ENCODE measurements at regions of chr7 and their contacts with region 1.

Region 1: GRCh38 chr7:55964261-55965099 is at the start of gene NIPSNAP2:
- DNase-seq: peak; percentile 26 to 89 (median 53)
- ATAC-seq: peak; percentile 92
- H3K4me3 ChIP-seq: peak within 1 kb of the TSS; percentile 60
- H3K4me3 Mint-ChIP-seq: peak within 1 kb of the TSS; percentile 90
- H3K27ac ChIP-seq: peak within 1 kb of the TSS; percentile 70 to 76
- H3K27ac Mint-ChIP-seq: peak within 1 kb of the TSS; percentile 92
- H3K4me1 ChIP-seq: peaks cover 37% of the 10 kb centered on the region
- H3K4me1 Mint-ChIP-seq: peaks cover 43% of the 10 kb centered on the region
- H3K27me3 ChIP-seq: no peaks in the 10 kb centered on the region
- H3K27me3 Mint-ChIP-seq: no peaks in the 10 kb centered on the region
- CTCF ChIP-seq: peak; percentile 13
- total RNA-seq, gene NIPSNAP2: 40.7 to 45.9 TPM

Region 2: DNA sequence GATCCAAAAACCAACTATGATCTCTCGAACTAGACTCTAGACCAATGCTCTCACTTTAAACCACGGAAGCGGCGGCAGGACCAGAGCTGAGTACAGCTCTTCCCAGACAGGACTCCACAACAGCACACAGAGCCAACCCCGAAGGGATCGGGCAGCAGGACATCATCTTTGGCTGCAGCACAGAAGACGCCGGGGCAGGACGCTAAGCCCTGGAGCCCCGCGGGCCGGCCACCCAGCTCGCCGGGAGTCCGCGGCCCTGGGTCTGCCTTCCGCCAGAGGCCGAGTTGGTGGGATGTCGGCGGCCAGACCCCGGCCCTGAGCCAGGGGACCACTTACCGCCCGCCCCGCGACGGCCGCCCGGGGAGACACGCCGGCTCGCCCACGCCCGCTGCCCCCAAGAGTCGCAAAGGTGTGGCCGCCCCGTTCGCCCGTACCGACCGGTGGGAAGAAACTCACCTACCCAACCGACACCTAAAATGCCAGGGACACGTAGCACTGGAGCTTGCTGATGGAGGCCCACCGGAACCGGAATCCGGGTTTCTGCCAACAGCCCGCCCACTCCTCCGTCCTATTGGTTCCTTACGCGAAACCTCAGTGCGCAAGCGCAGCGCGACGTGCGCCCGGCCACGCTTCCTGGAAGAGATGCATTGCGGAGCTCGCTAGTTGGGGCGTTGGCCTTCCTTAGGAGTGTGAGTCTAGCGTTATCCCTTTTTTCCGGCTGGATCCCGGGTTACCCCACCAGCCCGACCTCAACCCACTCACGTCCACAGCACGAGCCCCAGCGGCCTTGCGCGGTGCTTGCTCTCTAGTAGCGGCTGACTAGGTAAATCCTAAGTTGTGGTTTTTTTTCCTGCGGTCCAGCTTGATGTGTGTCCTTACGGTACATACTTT is 1205.5 kb before region 1 on chr7 and contains the start of gene SEC61G:
- CTCF ChIA-PET with region 1: no interaction called
- POLR2A ChIA-PET with region 1: no interaction called
- intact Hi-C with region 1: loop called in 1 of 2 experiments (anchors 10 kb)
- DNase-seq: peak; percentile 91 to 98 (median 93)
- ATAC-seq: peak; percentile 97
- H3K4me3 ChIP-seq: peak within 1 kb of the TSS; percentile 69
- H3K4me3 Mint-ChIP-seq: peak within 1 kb of the TSS; percentile 96
- H3K27ac ChIP-seq: peak within 1 kb of the TSS; percentile 63 to 73
- H3K27ac Mint-ChIP-seq: peak within 1 kb of the TSS; percentile 95
- H3K4me1 ChIP-seq: peaks cover 21% of the 10 kb centered on the region
- H3K4me1 Mint-ChIP-seq: peaks cover 54% of the 10 kb centered on the region
- H3K27me3 ChIP-seq: no peaks in the 10 kb centered on the region
- H3K27me3 Mint-ChIP-seq: no peaks in the 10 kb centered on the region
- CTCF ChIP-seq: no peak
- total RNA-seq, gene SEC61G: 43.9 to 51.3 TPM

Region 3: GRCh38 chr7:55280031-55280454 is 684.4 kb before region 1 on chr7:
- CTCF ChIA-PET with region 1: no interaction called
- POLR2A ChIA-PET with region 1: no interaction called
- intact Hi-C with region 1: loop called in 1 of 2 experiments (anchors 10 kb)
- DNase-seq: peak; percentile 23 to 81 (median 44)
- ATAC-seq: peak; percentile 63
- H3K4me3 ChIP-seq: no peak overlapping the region
- H3K4me3 Mint-ChIP-seq: no peak overlapping the region
- H3K27ac ChIP-seq: no peak overlapping the region
- H3K27ac Mint-ChIP-seq: no peak overlapping the region
- H3K4me1 ChIP-seq: no peaks in the 10 kb centered on the region
- H3K4me1 Mint-ChIP-seq: no peaks in the 10 kb centered on the region
- H3K27me3 ChIP-seq: peaks cover 0 to 2% of the 10 kb centered on the region in 2 experiments
- H3K27me3 Mint-ChIP-seq: peaks cover 4% of the 10 kb centered on the region
- CTCF ChIP-seq: peak; percentile 71

Region 4: GRCh38 chr7:55572378-55573233 is 391.9 kb before region 1 on chr7 and contains the start of gene VOPP1:
- CTCF ChIA-PET with region 1: no interaction called
- POLR2A ChIA-PET with region 1: no interaction called
- intact Hi-C with region 1: loop called in 1 of 2 experiments (anchors 10 kb)
- DNase-seq: peak in 13 of 14 experiments; percentile 35 to 90 (median 57)
- ATAC-seq: peak; percentile 38
- H3K4me3 ChIP-seq: peak within 1 kb of the TSS; percentile 85
- H3K4me3 Mint-ChIP-seq: peak within 1 kb of the TSS; percentile 96
- H3K27ac ChIP-seq: peak within 1 kb of the TSS; percentile 75 to 89
- H3K27ac Mint-ChIP-seq: peak within 1 kb of the TSS; percentile 87
- H3K4me1 ChIP-seq: peaks cover 59% of the 10 kb centered on the region
- H3K4me1 Mint-ChIP-seq: peaks cover 63% of the 10 kb centered on the region
- H3K27me3 ChIP-seq: no peaks in the 10 kb centered on the region
- H3K27me3 Mint-ChIP-seq: no peaks in the 10 kb centered on the region
- CTCF ChIP-seq: no peak
- total RNA-seq, gene VOPP1: 49.6 to 53.1 TPM

Region 5: GRCh38 chr7:55887821-55888247 is 76.6 kb before region 1 on chr7:
- CTCF ChIA-PET with region 1: no interaction called
- POLR2A ChIA-PET with region 1: no interaction called
- intact Hi-C with region 1: loop called in 1 of 2 experiments (anchors 5 kb)
- DNase-seq: peak in 1 of 14 experiments; percentile 1
- ATAC-seq: peak; percentile 12
- H3K4me3 ChIP-seq: peak overlapping the region; percentile 60
- H3K4me3 Mint-ChIP-seq: peak overlapping the region; percentile 90
- H3K27ac ChIP-seq: no peak overlapping the region
- H3K27ac Mint-ChIP-seq: peak overlapping the region; percentile 90
- H3K4me1 ChIP-seq: peaks cover 13% of the 10 kb centered on the region
- H3K4me1 Mint-ChIP-seq: peaks cover 6% of the 10 kb centered on the region
- H3K27me3 ChIP-seq: no peaks in the 10 kb centered on the region
- H3K27me3 Mint-ChIP-seq: no peaks in the 10 kb centered on the region
- CTCF ChIP-seq: no peak

Region 6: DNA sequence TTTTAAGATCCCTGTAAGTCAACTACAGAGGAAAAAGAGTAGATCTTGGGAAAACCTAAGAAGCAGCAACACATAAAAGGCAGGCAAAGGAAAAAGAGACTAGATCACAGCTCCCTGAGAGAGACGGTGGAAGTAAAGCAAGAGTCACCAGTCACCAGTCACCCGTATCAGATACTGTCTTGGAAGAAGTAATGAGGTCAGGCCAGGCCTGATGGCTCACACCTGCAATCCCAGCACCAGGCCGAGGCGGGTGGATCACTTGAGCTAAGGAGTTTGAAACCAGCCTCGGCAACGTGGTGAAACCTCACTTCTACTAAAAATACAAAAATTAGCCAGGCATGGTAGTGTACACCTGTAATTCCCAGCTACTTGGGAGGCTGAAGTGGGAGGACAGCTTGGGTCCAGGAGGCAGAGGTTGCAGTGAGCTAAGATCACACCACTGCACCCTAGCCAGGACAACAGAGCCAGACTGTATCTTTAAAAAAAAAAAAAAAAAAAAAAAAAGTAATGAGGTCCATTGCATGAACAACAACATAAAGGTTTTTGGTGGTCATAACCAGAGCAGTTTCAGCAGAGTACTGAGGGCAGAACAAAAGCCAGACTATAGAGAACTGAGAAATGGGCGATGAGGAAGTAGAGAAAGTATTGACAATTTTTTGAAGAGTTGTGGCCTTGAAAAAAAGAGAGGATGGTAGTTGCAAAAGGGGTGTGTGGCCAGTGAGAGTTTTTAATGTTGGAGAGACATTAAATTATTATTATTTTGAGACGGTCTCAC is 60.3 kb before region 1 on chr7:
- CTCF ChIA-PET with region 1: no interaction called
- POLR2A ChIA-PET with region 1: no interaction called
- intact Hi-C with region 1: no loop called
- DNase-seq: no peak
- ATAC-seq: no peak
- H3K4me3 ChIP-seq: no peak overlapping the region
- H3K4me3 Mint-ChIP-seq: no peak overlapping the region
- H3K27ac ChIP-seq: no peak overlapping the region
- H3K27ac Mint-ChIP-seq: no peak overlapping the region
- H3K4me1 ChIP-seq: no peaks in the 10 kb centered on the region
- H3K4me1 Mint-ChIP-seq: no peaks in the 10 kb centered on the region
- H3K27me3 ChIP-seq: no peaks in the 10 kb centered on the region
- H3K27me3 Mint-ChIP-seq: no peaks in the 10 kb centered on the region
- CTCF ChIP-seq: no peak

Region 7: GRCh38 chr7:56063882-56064625 is 99.6 kb after region 1 on chr7 and contains the start of gene SUMF2:
- CTCF ChIA-PET with region 1: interaction called, 5 read pairs
- POLR2A ChIA-PET with region 1: interaction called, 5 read pairs
- intact Hi-C with region 1: loop called in 1 of 2 experiments (anchors 5 kb)
- DNase-seq: peak; percentile 81 to 97 (median 89)
- ATAC-seq: peak; percentile 89
- H3K4me3 ChIP-seq: peak within 1 kb of the TSS; percentile 95
- H3K4me3 Mint-ChIP-seq: peak within 1 kb of the TSS; percentile 93
- H3K27ac ChIP-seq: peak within 1 kb of the TSS; percentile 82 to 84
- H3K27ac Mint-ChIP-seq: peak within 1 kb of the TSS; percentile 95
- H3K4me1 ChIP-seq: peaks cover 25% of the 10 kb centered on the region
- H3K4me1 Mint-ChIP-seq: peaks cover 31% of the 10 kb centered on the region
- H3K27me3 ChIP-seq: no peaks in the 10 kb centered on the region
- H3K27me3 Mint-ChIP-seq: no peaks in the 10 kb centered on the region
- CTCF ChIP-seq: no peak
- total RNA-seq, gene SUMF2: 95.8 to 102 TPM

Measured in CD4-positive, alpha-beta T cell (primary cell).